ENCODE measurements at regions of chr17 and their contacts with region 1.

Region 1: GRCh38 chr17:29557085-29557697 is 9.6 kb downstream of the ABHD15 start:
- DNase-seq: no peak
- ATAC-seq: no peak
- H3K4me3 ChIP-seq: no peak overlapping the region
- H3K27ac ChIP-seq: no peak overlapping the region
- H3K4me1 ChIP-seq: peaks cover 39% of the 10 kb centered on the region
- H3K27me3 ChIP-seq: peaks cover 0 to 10% of the 10 kb centered on the region in 2 experiments; a peak in 2 of 5 replicates
- CTCF ChIP-seq: no peak
- EP300 ChIP-seq: no peak
- POLR2A ChIP-seq: no peak
- RAD21 ChIP-seq: no peak

Region 2: GRCh38 chr17:28792877-28793661 is 764.1 kb before region 1 on chr17:
- CTCF ChIA-PET with region 1: no interaction called
- POLR2A ChIA-PET with region 1: no interaction called
- in situ Hi-C with region 1: no loop called
- intact Hi-C with region 1: no loop called
- DNase-seq: no peak
- ATAC-seq: no peak
- H3K4me3 ChIP-seq: no peak overlapping the region
- H3K27ac ChIP-seq: no peak overlapping the region
- H3K4me1 ChIP-seq: peaks cover 9% of the 10 kb centered on the region
- H3K27me3 ChIP-seq: no peaks in the 10 kb centered on the region
- CTCF ChIP-seq: no peak
- EP300 ChIP-seq: no peak
- POLR2A ChIP-seq: no peak
- RAD21 ChIP-seq: no peak

Region 3: GRCh38 chr17:29568331-29569244 is 11.4 kb after region 1 on chr17 and contains the start of gene TP53I13:
- CTCF ChIA-PET with region 1: no interaction called
- POLR2A ChIA-PET with region 1: interaction called, 24 read pairs
- in situ Hi-C with region 1: no loop called
- intact Hi-C with region 1: no loop called
- DNase-seq: peak; percentile 51
- ATAC-seq: peak; percentile 25
- H3K4me3 ChIP-seq: peak within 1 kb of the TSS; percentile 72 to 94 (median 84)
- H3K27ac ChIP-seq: peak within 1 kb of the TSS; percentile 86
- H3K4me1 ChIP-seq: peaks cover 29% of the 10 kb centered on the region
- H3K27me3 ChIP-seq: no peaks in the 10 kb centered on the region
- CTCF ChIP-seq: no peak; the same call in 1 of the 2 replicates
- EP300 ChIP-seq: no peak
- POLR2A ChIP-seq: peak; percentile 12 to 72; a peak in 2 of 4 replicates
- RAD21 ChIP-seq: no peak; the same call in 1 of the 2 replicates
- total RNA-seq, gene TP53I13: 9.9 and 25.7 TPM in 2 replicates

Region 4: DNA sequence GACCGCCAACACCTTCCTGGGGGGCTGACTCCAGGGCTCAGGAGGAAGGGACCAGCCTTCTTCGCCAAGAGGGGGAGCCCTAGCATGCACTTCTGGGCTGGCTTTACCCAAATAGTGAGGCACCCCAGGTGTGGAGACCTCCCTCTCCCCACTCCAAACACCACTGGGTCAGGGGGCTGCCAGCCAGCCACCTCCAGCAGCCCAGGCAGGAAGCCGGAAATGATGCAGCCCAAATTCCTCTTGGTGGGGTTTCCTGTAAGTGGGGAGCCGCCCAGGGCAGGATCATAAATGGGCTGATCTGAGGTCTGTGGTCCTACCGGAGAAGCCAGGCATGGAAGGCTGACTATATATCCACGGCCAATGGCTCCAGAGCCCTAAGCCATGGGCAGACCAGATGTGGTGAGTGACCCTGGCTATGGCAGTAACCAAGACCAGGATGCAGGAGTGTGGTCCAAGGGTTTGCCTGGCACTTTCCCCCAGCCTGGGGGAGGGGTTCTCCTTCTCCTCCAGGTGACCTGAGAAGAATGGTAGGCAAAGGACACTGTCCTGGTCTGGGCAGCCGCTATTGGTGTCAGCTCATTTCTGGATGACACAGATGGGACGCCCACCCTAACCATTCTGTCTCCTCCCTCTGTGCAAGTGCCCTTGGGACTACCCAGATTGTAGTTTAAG is 28.0 kb after region 1 on chr17:
- CTCF ChIA-PET with region 1: no interaction called
- POLR2A ChIA-PET with region 1: no interaction called
- in situ Hi-C with region 1: no loop called
- intact Hi-C with region 1: no loop called
- DNase-seq: no peak
- ATAC-seq: no peak
- H3K4me3 ChIP-seq: no peak overlapping the region
- H3K27ac ChIP-seq: no peak overlapping the region
- H3K4me1 ChIP-seq: peaks cover 31% of the 10 kb centered on the region
- H3K27me3 ChIP-seq: no peaks in the 10 kb centered on the region
- CTCF ChIP-seq: peak; percentile 32
- EP300 ChIP-seq: no peak
- POLR2A ChIP-seq: no peak
- RAD21 ChIP-seq: no peak

Region 5: GRCh38 chr17:29954405-29954804 is 397.2 kb after region 1 on chr17:
- CTCF ChIA-PET with region 1: no interaction called
- POLR2A ChIA-PET with region 1: no interaction called
- in situ Hi-C with region 1: no loop called
- intact Hi-C with region 1: no loop called
- DNase-seq: no peak
- ATAC-seq: no peak
- H3K4me3 ChIP-seq: no peak overlapping the region
- H3K27ac ChIP-seq: no peak overlapping the region
- H3K4me1 ChIP-seq: no peaks in the 10 kb centered on the region
- H3K27me3 ChIP-seq: no peaks in the 10 kb centered on the region; a peak in 1 of 5 replicates
- CTCF ChIP-seq: no peak
- EP300 ChIP-seq: no peak
- POLR2A ChIP-seq: no peak
- RAD21 ChIP-seq: no peak

Measured in HepG2 (cell line).